BJ (cell line): ENCODE measurements at regions of chr7 and their contacts with region 1.

Region 1: DNA sequence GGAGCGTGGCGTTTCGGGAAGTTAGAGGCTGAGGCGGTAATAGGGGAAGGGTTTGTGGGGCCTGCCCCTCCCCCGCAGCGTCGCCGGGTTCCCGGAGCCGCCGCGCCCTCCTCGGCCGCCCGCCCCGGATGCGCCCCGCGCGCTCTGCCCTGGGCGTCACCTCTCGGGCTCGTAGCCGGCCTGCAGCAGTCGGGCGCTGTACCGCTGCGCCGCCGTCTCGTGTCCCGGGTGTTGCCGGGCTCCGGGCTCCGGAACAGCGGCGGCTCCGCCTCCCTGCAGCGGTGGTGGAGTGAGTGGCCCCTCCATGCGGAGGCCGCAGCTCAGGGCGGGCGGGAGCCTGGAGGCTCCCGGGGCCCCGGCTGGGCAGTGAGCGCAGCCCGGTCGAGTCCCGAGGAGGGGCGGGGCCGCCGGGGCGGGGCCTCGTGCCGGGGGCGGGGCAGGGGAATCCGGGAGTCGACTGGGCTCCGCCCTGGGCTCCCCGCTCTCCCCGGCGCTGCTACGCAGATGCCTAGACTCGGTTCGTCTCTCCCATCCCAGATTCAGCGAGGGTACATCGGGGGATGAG is at the start of gene IMPDH1:
- DNase-seq: peak; percentile 34
- H3K4me3 ChIP-seq: peak within 1 kb of the TSS; percentile 60
- H3K27me3 ChIP-seq: peaks cover 2% of the 10 kb centered on the region
- CTCF ChIP-seq: no peak
- polyA plus RNA-seq, gene IMPDH1: 65.7 and 84.5 TPM in 2 replicates

Region 2: GRCh38 chr7:128398016-128398840 is 11.4 kb before region 1 on chr7:
- CTCF ChIA-PET with region 1: interaction called, 31 read pairs
- POLR2A ChIA-PET with region 1: no interaction called
- DNase-seq: no peak
- H3K4me3 ChIP-seq: no peak overlapping the region
- H3K27me3 ChIP-seq: no peaks in the 10 kb centered on the region
- CTCF ChIP-seq: peak; percentile 94

Region 3: DNA sequence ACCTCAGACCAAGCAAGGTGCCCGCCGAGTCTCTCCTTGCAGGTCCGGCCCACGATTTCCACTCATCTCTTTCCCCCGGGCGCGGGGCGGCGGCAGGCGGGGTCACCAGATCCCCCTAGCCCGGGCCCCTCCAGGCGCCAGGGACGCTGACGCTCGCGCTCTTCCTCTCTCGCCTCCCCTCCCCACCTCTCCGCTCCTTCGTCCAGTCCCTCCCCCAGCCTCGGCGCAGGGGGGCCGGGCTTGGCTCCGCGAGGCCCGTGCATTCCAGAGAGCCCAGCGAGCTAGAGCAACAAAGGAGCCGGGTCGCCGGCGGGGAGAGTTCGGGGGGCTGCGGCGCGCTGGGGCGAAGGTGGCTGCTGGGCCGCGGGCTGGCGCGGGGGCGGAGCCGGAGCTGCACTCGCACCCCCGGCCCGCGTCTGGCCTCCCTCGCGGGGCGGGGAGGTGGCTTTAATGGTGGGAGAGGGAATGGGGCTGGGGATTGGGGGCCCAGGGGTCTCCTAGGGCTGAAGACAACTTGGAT is 778.8 kb after region 1 on chr7 and contains the start of gene SMO:
- CTCF ChIA-PET with region 1: no interaction called
- POLR2A ChIA-PET with region 1: interaction called, 10 read pairs
- DNase-seq: no peak
- H3K4me3 ChIP-seq: peak within 1 kb of the TSS; percentile 61
- H3K27me3 ChIP-seq: peaks cover 2% of the 10 kb centered on the region; the same call in 1 of the 2 replicates
- CTCF ChIP-seq: no peak
- polyA plus RNA-seq, gene SMO: 7.6 and 10.8 TPM in 2 replicates